Dorsolateral prefrontal cortex (tissue), 120 donors: ENCODE measurements at regions of chr3 and their contacts with region 1.

Region 1: DNA sequence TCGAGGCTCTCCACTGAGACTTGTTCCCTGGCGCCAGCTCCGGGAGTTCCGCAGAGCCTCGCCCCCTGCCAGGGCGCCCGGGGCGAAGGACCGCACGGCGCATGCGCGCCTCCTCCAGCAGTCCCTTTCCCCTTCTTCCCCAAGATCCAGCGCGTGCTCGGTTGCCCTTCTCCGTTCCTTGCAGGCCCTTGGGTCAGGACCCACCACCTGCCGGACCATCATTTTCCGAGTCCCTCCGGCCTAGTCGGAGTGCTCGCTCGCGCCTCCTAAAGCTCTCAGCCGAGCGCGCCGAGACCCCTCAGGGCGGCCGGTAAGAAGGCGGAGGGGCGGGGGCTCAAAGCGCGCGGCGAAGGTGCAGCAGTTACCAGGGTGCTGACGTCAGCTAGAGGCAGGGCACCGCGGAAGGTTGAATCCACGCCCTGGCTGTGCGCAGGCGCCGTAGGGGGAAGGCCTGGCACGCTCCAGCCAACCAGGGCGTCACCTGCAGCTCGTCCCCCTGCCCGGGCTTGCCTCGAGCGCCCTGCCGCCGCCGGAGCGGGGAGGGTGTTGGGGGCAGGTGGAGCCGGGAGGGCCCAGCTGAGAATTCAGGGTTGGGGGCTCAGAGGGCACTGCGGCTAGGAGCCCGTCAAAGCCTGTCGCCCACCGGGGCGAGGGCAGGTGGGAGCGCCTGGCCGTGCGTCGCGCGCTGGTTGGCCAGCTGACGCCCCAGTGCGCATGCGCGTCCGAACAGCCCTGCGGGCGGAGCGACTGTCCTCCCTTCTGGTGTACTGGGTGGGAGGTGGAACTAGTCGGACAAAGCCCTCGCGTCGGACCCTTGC is at the start of gene TCAIM:
- DNase-seq: peak; percentile 86 to 97 (median 94)
- H3K4me3 ChIP-seq: peak within 1 kb of the TSS; percentile 60 to 97 (median 85)
- H3K27ac ChIP-seq: peak within 1 kb of the TSS; percentile 84 to 100 (median 98)
- H3K27me3 ChIP-seq: no peaks in the 10 kb centered on the region
- CTCF ChIP-seq: peak in 15 of 56 donors; percentile 2 to 30 (median 15)
- total RNA-seq, gene TCAIM: 24.2 to 49.5 (median 35.3) TPM

Region 2: GRCh38 chr3:43621656-43622432 is 716.4 kb before region 1 on chr3 and contains the start of gene ANO10:
- intact Hi-C with region 1: loop called in 1 of 2 experiments (anchors 5 kb)
- DNase-seq: peak; percentile 96 to 99 (median 97)
- H3K4me3 ChIP-seq: peak within 1 kb of the TSS; percentile 73 to 96 (median 90)
- H3K27ac ChIP-seq: peak within 1 kb of the TSS in 58 of 59 donors; percentile 41 to 95 (median 82)
- H3K27me3 ChIP-seq: no peaks in the 10 kb centered on the region
- CTCF ChIP-seq: peak in 15 of 56 donors; percentile 0 to 57 (median 27)
- total RNA-seq, gene ANO10: 24.1 to 52.4 (median 34.0) TPM

Region 3: DNA sequence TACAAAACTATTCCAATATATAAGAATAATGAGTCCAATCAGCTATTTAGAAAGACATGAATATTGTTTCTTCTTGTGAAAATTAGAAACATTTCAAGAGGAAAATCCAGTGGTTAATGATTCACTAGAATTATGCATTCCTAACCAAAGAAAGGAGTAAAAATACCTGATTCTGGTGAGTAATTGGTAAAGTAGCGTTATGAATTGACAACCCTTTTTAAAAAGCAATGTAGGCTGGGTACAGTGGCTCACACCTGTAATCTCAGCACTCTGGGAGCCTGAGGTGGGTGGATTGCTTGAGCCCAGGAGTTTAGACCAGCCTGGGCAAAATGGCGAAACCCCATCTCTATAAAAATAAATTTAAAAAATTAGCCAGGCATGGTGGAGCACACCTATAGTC is 53.3 kb before region 1 on chr3:
- intact Hi-C with region 1: no loop called
- DNase-seq: no peak
- H3K4me3 ChIP-seq: no peak overlapping the region
- H3K27ac ChIP-seq: no peak overlapping the region
- H3K27me3 ChIP-seq: peaks cover 0 to 8% (median 0%) of the 10 kb centered on the region in 45 donors
- CTCF ChIP-seq: no peak

Region 4: GRCh38 chr3:44477312-44478030 is 139.3 kb after region 1 on chr3 and contains the start of gene ZNF445:
- intact Hi-C with region 1: loop called (anchors 2 to 10 kb)
- DNase-seq: peak; percentile 58 to 92 (median 77)
- H3K4me3 ChIP-seq: peak within 1 kb of the TSS; percentile 39 to 94 (median 80)
- H3K27ac ChIP-seq: peak within 1 kb of the TSS in 54 of 59 donors; percentile 20 to 91 (median 75)
- H3K27me3 ChIP-seq: no peaks in the 10 kb centered on the region
- CTCF ChIP-seq: peak in 9 of 56 donors; percentile 13 to 57 (median 21)
- total RNA-seq, gene ZNF445: 30.2 to 47.3 (median 38.2) TPM

Region 5: GRCh38 chr3:44861412-44862220 is 523.4 kb after region 1 on chr3 and contains the start of gene TMEM42:
- intact Hi-C with region 1: loop called in 1 of 2 experiments (anchors 10 kb)
- DNase-seq: peak; percentile 88 to 97 (median 91)
- H3K4me3 ChIP-seq: peak within 1 kb of the TSS; percentile 55 to 98 (median 83)
- H3K27ac ChIP-seq: peak within 1 kb of the TSS; percentile 82 to 98 (median 94)
- H3K27me3 ChIP-seq: no peaks in the 10 kb centered on the region
- CTCF ChIP-seq: peak in 40 of 56 donors; percentile 2 to 50 (median 28)
- total RNA-seq, gene TMEM42: 13.8 to 39.0 (median 21.6) TPM

Region 6: GRCh38 chr3:44976002-44976815 is 638.0 kb after region 1 on chr3 and contains the starts of genes EXOSC7 and ZDHHC3:
- intact Hi-C with region 1: loop called in 1 of 2 experiments (anchors 5 kb)
- DNase-seq: peak; percentile 78 to 90 (median 86)
- H3K4me3 ChIP-seq: peak within 1 kb of the TSS; percentile 65 to 100 (median 94)
- H3K27ac ChIP-seq: peak within 1 kb of the TSS in 50 of 59 donors; percentile 37 to 92 (median 72)
- H3K27me3 ChIP-seq: no peaks in the 10 kb centered on the region
- CTCF ChIP-seq: peak in 33 of 56 donors; percentile 7 to 60 (median 26)
- total RNA-seq, gene EXOSC7: 25.6 to 46.6 (median 33.5) TPM
- total RNA-seq, gene ZDHHC3: 41.3 to 77.7 (median 54.1) TPM

Region 7: DNA sequence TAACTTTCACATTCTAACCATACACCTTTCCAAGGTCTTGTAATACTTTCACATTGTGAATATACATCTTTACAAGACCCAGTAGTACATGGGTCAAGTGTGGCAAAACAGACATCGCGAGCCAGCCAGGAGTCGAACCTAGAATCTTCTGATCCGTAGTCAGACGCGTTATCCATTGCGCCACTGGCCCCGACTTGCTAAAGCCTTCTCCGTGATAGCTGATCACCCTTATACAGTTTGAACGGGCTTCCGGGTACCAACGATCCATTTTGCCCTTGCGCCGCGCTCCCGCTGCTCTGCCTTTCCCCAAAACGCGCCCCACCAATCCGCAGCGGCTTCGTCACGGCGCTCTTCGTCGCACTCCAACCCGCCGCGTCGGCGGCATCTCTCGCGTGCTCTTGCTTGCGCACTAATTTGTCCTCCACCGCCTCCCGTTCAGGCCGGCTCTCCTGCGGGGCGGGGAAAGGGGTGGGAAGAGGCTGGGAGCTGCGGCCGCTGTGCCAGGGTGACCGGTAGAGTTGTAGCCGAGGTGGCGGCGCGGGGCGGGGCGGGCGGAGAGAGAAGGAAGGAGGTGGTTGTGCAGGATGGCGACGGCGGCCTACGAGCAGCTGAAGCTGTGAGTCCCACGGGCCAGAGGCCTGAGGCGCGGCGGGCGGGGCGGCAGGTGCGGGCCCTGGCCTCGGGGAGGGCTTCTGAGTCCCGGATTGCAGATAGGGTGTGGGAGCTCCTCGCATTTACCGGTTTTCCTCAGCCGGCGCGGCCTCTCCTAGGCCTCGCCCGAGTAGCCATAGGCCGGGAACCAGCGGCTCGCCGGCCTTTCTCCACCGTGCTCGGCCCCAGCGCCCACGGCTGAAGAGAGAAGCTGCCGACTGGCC is 1350.9 kb after region 1 on chr3 and contains the start of gene SACM1L:
- intact Hi-C with region 1: loop called in 1 of 2 experiments (anchors 5 kb)
- DNase-seq: peak; percentile 92 to 99 (median 96)
- H3K4me3 ChIP-seq: peak within 1 kb of the TSS; percentile 64 to 100 (median 89)
- H3K27ac ChIP-seq: peak within 1 kb of the TSS; percentile 46 to 98 (median 91)
- H3K27me3 ChIP-seq: no peaks in the 10 kb centered on the region
- CTCF ChIP-seq: peak in 26 of 56 donors; percentile 4 to 50 (median 26)
- total RNA-seq, gene SACM1L: 44.0 to 100 (median 73.4) TPM